ENCODE measurements at regions of chr10 and their contacts with region 1.

Region 1: GRCh38 chr10:128047351-128047750 is 78.9 kb downstream of the MKI67 start:
- DNase-seq: peak; percentile 76
- ATAC-seq: peak; percentile 99
- H3K4me3 Mint-ChIP-seq: peak overlapping the region; percentile 91
- H3K27ac Mint-ChIP-seq: peak overlapping the region; percentile 95
- H3K4me1 Mint-ChIP-seq: peaks cover 33% of the 10 kb centered on the region
- H3K27me3 Mint-ChIP-seq: no peaks in the 10 kb centered on the region

Region 2: DNA sequence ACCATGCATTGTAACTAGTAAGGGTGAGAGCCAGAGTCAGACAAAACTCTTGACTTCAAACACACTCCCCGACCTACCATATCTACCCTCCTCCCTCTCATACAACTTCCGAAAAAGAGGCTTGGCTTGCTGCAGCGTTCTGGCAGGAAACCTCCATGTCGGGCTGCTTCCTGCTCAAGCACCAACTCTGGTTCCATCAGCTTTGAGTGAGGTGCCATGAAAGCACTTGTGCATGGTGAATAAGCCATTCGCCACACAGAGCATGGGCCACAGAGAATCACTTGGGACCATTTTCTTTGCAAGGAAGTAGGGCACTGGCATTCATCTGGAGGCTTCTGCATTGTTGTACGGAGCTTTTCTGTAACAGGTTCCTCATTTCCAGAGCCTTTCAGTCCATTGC is 257.1 kb before region 1 on chr10:
- POLR2A ChIA-PET with region 1: no interaction called
- DNase-seq: no peak
- ATAC-seq: no peak
- H3K4me3 Mint-ChIP-seq: no peak overlapping the region
- H3K27ac Mint-ChIP-seq: no peak overlapping the region
- H3K4me1 Mint-ChIP-seq: no peaks in the 10 kb centered on the region
- H3K27me3 Mint-ChIP-seq: peaks cover 15% of the 10 kb centered on the region

Region 3: DNA sequence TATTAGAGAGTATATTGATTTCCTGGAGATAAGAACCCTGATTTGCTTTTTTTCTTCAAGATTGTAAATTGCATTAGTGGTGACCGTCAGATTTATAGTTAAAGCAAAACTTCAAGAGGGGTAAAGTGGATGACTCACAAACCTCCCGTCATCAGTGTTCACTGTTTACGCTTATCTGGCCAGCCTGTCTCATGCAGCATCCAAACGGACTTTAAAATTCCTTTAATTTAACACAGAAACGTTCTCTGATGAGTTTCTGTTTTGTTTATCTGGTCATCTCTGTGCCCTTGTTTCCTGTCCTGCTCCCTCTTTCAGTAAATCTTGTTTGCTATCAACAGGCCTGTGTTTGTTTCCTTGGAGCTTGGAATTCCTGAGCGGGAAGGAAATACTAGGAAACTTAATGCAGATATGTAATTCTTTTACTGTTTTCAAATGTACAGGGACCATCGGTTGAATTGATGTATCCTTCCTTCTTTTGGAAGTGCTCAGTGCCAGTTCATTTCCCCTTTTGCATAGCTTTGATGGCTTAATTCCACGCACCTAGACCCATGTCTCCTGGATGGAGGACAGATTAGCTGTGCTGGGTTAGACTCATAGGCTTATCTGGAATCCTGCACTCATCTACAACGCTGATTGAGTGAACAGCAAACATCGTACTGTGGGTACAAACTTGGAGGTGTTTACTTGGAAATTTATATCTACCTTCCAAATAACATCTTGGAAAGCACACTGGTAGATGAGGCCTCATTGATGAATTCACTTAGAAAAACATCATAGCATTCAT is 119.1 kb before region 1 on chr10:
- POLR2A ChIA-PET with region 1: no interaction called
- DNase-seq: no peak
- ATAC-seq: no peak
- H3K4me3 Mint-ChIP-seq: no peak overlapping the region
- H3K27ac Mint-ChIP-seq: no peak overlapping the region
- H3K4me1 Mint-ChIP-seq: peaks cover 3% of the 10 kb centered on the region
- H3K27me3 Mint-ChIP-seq: no peaks in the 10 kb centered on the region

Region 4: DNA sequence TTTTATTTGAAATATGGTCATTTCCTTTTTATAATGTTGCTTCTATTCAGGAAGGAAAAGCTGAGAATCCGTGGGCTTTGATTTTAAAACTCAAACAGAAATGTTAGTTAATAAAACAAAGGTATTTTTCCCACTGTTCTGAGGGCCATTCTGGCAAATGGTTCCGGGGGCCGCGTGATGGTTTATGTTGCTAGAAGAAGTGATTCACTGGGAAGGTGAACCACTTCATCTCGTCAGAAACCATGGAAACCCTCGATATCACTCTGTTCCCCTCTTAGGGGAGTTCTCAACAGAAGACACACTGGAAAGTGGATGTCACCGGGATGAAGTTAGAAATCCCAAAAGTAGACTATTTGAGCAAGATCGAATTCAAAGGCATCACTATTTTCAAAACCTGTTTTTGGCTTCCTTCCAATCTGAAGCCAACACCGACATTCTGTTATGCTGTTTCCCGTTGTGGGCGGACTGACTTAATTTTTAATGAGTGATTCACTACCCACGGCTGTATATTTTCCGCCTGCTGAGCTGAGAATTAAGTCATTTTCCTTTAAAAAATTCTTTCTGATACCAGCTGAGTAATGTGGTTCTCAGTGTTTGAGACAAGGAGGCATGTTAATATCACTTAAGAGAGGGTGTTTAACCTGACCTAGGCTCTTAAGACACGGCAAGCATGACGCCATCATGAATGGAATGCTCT is 56.4 kb before region 1 on chr10:
- POLR2A ChIA-PET with region 1: no interaction called
- DNase-seq: no peak
- ATAC-seq: peak; percentile 50
- H3K4me3 Mint-ChIP-seq: peak overlapping the region; percentile 35
- H3K27ac Mint-ChIP-seq: peak overlapping the region; percentile 30
- H3K4me1 Mint-ChIP-seq: peaks cover 9% of the 10 kb centered on the region
- H3K27me3 Mint-ChIP-seq: peaks cover 14% of the 10 kb centered on the region

Region 5: GRCh38 chr10:128069351-128070051 is 22.1 kb after region 1 on chr10:
- POLR2A ChIA-PET with region 1: interaction called, 125 read pairs
- DNase-seq: peak; percentile 81
- ATAC-seq: peak; percentile 49
- H3K4me3 Mint-ChIP-seq: no peak overlapping the region
- H3K27ac Mint-ChIP-seq: no peak overlapping the region
- H3K4me1 Mint-ChIP-seq: peaks cover 46% of the 10 kb centered on the region
- H3K27me3 Mint-ChIP-seq: no peaks in the 10 kb centered on the region

Measured in activated naive CD8-positive, alpha-beta T cell treated with anti-CD3 and anti-CD28 coated beads, Interleukin-2, amount 10 ng/mL, durations not matched to agents 7 days and 5 days (primary cell).